Activated CD8-positive, alpha-beta T cell treated with anti-CD3 and anti-CD28 coated beads, Interleukin-2, amount 10 ng/mL, durations not matched to agents 7 days and 5 days (primary cell): ENCODE measurements at regions of chr17 and their contacts with region 1.

Region 1: DNA sequence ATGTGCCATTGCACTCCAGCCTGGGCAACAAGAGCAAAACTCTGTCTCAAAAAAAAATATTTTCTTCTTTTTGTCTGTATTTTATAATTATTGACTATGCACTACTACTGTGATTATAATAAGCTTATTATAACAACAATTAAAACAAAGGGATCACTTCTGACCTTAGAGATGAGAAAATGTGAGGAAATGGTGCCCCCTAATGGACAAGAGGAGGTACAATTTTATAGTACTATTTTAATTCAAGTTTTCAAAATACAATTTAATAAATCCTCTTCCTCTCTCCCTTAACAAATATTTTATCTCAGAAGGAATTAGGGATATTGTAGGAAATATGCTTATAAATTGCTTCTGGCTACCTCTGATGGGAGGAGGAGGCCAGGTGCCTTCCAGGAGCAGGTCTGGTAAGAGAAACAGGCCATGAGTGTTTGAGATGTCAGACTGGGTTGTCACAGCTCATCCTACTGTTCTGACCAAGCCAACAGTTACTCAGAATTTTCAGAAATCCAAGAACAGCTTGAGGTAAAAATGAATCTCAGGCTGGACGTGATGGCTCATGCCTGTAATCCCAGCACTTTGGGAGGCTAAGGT is 14.0 kb downstream of the VPS53 start:
- DNase-seq: no peak
- ATAC-seq: peak; percentile 55
- H3K4me3 Mint-ChIP-seq: no peak overlapping the region
- H3K27ac Mint-ChIP-seq: no peak overlapping the region
- H3K4me1 Mint-ChIP-seq: no peaks in the 10 kb centered on the region
- H3K27me3 Mint-ChIP-seq: no peaks in the 10 kb centered on the region

Region 2: DNA sequence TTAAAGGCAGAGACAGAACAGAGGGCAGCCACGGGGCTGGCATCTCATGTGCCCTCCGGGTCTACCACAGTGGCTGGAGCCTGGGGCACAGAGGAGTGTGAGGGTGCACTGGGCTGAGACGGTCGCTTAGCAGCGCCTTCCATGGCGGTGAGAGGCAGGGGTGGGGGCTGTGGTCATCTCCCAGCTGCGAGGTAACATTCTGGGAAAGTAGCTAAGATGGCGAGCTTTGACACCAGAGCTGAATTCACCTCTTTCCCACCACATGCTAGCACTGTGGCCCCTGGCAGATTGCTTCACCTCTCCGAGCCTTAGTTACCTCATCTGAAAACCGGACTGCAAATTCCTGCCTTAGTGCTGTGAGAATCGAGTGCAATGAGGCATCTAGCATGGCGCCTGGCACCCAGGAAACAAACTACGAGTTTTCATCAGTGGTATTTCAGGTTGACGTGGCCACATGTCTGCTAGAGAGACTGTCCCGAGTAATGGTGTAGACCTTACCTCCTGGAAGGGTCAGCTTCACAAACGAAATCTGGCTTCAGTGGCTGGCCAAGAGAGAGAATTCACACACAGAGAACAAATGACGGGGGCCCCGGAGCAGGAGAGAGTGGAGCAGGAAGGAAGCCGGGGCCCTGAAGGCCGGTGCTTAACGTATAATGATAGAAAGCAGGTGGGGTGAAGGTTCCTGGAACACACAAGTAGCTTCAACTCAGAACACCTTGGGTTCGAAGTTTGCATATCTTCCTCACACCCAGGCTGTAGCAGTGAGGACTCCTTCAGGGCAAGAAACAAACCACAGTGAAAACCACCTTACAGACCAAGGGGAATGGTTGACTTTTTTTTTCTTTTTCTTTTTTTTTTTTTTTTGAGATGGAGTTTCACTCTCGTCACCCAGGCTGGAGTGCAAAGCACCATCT is 284.0 kb before region 1 on chr17:
- CTCF ChIA-PET with region 1: interaction called, 209 read pairs
- POLR2A ChIA-PET with region 1: interaction called, 4 read pairs
- DNase-seq: peak; percentile 82
- ATAC-seq: peak; percentile 72
- H3K4me3 Mint-ChIP-seq: peak overlapping the region; percentile 86
- H3K27ac Mint-ChIP-seq: peak overlapping the region; percentile 98
- H3K4me1 Mint-ChIP-seq: peaks cover 91% of the 10 kb centered on the region
- H3K27me3 Mint-ChIP-seq: no peaks in the 10 kb centered on the region

Region 3: DNA sequence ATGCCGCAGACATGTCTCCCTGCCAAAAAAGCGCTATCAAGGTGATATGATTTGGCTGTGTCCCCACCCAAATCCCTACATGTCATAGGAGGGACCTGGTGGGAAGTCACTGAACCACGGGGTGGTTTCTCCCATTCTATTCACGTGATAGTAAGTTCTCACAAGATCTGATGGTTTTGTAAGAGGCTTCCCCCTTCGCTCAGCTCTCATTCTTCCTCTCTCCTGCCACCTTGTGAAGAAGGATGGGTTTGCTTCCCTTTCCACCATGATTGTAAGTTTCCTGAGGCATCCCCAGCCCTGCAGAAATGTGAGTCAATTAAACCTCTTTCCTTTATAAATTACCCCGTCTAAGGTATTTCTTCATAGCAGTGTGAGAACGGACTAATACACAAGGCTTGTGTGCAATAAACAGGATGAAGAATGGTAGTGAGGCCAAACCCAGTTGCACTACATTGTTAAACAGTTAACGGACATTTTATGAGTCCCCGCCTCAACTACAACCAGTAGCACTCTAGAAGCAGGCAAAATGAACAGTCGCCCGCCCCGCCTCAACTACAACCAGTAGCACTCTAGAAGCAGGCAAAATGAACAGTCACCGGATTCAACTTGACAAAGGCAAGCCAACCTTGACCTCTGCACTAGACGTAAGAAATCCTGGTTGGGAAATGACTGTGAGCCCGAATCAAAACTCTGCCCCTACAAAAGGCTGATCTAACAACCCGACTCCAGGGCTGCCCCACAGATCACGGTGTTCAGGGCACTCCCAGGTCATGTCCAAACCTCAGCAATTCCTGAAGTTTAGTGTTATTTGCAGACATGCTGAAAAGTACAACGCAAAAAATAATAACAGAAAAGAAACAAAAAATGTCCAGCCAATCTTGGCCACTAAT is 12.3 kb before region 1 on chr17:
- CTCF ChIA-PET with region 1: interaction called, 11 read pairs
- POLR2A ChIA-PET with region 1: no interaction called
- DNase-seq: no peak
- ATAC-seq: no peak
- H3K4me3 Mint-ChIP-seq: no peak overlapping the region
- H3K27ac Mint-ChIP-seq: no peak overlapping the region
- H3K4me1 Mint-ChIP-seq: peaks cover 4% of the 10 kb centered on the region
- H3K27me3 Mint-ChIP-seq: no peaks in the 10 kb centered on the region

Region 4: DNA sequence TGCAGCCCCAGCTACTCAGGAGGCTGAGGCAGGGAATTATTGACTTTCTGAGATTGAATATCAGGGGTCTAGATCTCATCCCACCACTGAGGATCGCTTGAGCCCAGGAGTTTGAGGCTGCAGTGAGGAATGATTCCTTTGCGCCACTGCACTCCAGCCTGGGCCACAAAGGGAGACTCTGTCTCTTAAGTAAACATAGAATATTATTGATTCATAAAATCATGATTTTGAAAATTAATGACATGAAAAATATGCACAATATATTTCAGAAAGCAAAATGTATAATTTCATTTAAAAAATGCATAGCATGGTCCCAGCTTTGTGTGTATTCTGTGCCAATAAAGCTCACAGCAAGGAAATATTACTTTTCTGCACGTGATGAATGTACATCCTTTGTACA is 15.6 kb after region 1 on chr17:
- CTCF ChIA-PET with region 1: interaction called, 22 read pairs
- POLR2A ChIA-PET with region 1: interaction called, 3 read pairs
- DNase-seq: no peak
- ATAC-seq: no peak
- H3K4me3 Mint-ChIP-seq: no peak overlapping the region
- H3K27ac Mint-ChIP-seq: no peak overlapping the region
- H3K4me1 Mint-ChIP-seq: peaks cover 21% of the 10 kb centered on the region
- H3K27me3 Mint-ChIP-seq: no peaks in the 10 kb centered on the region